CD4-positive, alpha-beta T cell (primary cell): ENCODE measurements at regions of chr3 and their contacts with region 1.

Region 1: GRCh38 chr3:70064194-70064779 is 64.8 kb downstream of the SAMMSON start:
- DNase-seq: peak in 4 of 14 experiments; percentile 3 to 34 (median 15)
- ATAC-seq: no peak
- H3K4me3 ChIP-seq: no peak overlapping the region
- H3K4me3 Mint-ChIP-seq: no peak overlapping the region
- H3K27ac ChIP-seq: no peak overlapping the region
- H3K27ac Mint-ChIP-seq: no peak overlapping the region
- H3K4me1 ChIP-seq: no peaks in the 10 kb centered on the region
- H3K4me1 Mint-ChIP-seq: no peaks in the 10 kb centered on the region
- H3K27me3 ChIP-seq: no peaks in the 10 kb centered on the region
- H3K27me3 Mint-ChIP-seq: peaks cover 3% of the 10 kb centered on the region
- CTCF ChIP-seq: peak; percentile 54

Region 2: DNA sequence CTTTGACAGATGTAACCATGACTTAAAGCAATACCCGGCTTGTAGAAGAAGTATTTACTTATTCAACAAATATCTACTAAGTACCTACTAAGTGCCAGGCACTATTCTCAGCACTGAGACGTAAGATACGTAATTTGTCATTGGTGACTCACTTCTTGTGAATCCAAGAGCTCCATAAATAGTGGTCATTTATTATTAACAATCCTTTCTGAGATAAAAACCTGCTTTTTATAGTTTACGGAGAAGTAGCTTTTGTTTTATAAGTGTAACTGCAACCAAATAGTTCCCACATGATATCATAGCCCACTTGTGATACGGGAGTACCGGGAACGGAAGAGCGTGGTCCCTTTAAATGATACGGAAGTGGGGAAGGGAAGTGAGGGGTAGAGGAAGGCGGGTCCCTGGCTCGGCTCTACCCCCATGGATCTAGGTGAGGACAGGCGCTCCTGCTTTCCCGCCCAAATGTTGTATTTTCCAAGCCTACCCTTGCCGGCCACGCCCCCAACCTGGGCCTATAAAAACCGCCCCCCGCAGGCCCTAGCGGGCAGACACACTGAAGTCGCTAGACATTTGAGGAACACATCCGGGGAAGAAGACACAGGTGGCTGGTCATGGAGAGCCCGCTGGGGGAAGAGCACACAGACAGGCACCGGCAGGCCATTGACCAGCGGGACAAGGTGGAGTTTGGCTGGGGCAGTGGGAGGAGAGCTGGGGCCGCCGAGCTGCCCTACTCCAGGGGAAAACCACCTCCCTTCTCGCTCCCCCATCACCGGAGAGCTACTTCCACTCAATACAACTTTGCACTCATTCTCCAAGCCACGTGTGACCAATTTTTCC is 64.9 kb before region 1 on chr3 and contains the start of gene SAMMSON:
- CTCF ChIA-PET with region 1: no interaction called
- POLR2A ChIA-PET with region 1: no interaction called
- intact Hi-C with region 1: no loop called
- DNase-seq: no peak
- ATAC-seq: no peak
- H3K4me3 ChIP-seq: no peak within 1 kb of the TSS
- H3K4me3 Mint-ChIP-seq: no peak within 1 kb of the TSS
- H3K27ac ChIP-seq: no peak within 1 kb of the TSS
- H3K27ac Mint-ChIP-seq: no peak within 1 kb of the TSS
- H3K4me1 ChIP-seq: no peaks in the 10 kb centered on the region
- H3K4me1 Mint-ChIP-seq: no peaks in the 10 kb centered on the region
- H3K27me3 ChIP-seq: no peaks in the 10 kb centered on the region
- H3K27me3 Mint-ChIP-seq: no peaks in the 10 kb centered on the region
- CTCF ChIP-seq: no peak
- total RNA-seq, gene SAMMSON: not detected

Region 3: GRCh38 chr3:71616571-71617101 is 1552.3 kb after region 1 on chr3:
- CTCF ChIA-PET with region 1: no interaction called
- POLR2A ChIA-PET with region 1: no interaction called
- intact Hi-C with region 1: no loop called
- DNase-seq: no peak
- ATAC-seq: no peak
- H3K4me3 ChIP-seq: no peak overlapping the region
- H3K4me3 Mint-ChIP-seq: no peak overlapping the region
- H3K27ac ChIP-seq: no peak overlapping the region
- H3K27ac Mint-ChIP-seq: no peak overlapping the region
- H3K4me1 ChIP-seq: no peaks in the 10 kb centered on the region
- H3K4me1 Mint-ChIP-seq: peaks cover 9% of the 10 kb centered on the region
- H3K27me3 ChIP-seq: no peaks in the 10 kb centered on the region
- H3K27me3 Mint-ChIP-seq: no peaks in the 10 kb centered on the region
- CTCF ChIP-seq: no peak

Region 4: GRCh38 chr3:71652781-71653413 is 1588.6 kb after region 1 on chr3:
- CTCF ChIA-PET with region 1: no interaction called
- POLR2A ChIA-PET with region 1: no interaction called
- intact Hi-C with region 1: loop called (anchors 2 to 5 kb)
- DNase-seq: peak in 4 of 14 experiments; percentile 20 to 57 (median 38)
- ATAC-seq: no peak
- H3K4me3 ChIP-seq: no peak overlapping the region
- H3K4me3 Mint-ChIP-seq: no peak overlapping the region
- H3K27ac ChIP-seq: no peak overlapping the region
- H3K27ac Mint-ChIP-seq: no peak overlapping the region
- H3K4me1 ChIP-seq: no peaks in the 10 kb centered on the region
- H3K4me1 Mint-ChIP-seq: peaks cover 6% of the 10 kb centered on the region
- H3K27me3 ChIP-seq: no peaks in the 10 kb centered on the region
- H3K27me3 Mint-ChIP-seq: no peaks in the 10 kb centered on the region
- CTCF ChIP-seq: peak; percentile 36

Region 5: DNA sequence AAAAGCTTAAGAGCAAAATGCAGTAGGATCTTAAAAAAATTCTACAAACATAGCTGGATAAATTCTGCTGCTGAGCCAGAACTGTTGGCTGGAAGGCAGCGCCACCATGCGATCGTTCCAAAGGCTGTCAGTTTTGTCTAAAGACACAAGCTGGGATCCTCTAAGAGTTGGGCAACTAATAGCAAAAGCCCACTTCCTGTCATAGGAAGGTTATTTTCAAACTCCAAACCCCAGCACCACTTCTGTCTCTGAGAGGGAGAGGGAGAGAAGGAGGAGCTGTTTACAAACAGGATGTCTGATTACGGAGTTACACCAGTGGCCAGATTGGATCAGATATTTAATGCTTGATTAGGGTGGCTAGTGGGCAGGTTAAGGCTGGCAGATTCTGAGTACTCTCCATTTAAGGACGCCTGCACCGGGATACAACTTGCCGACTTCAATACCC is 1617.0 kb after region 1 on chr3:
- CTCF ChIA-PET with region 1: no interaction called
- POLR2A ChIA-PET with region 1: no interaction called
- intact Hi-C with region 1: loop called in 1 of 2 experiments (anchors 10 kb)
- DNase-seq: peak in 8 of 14 experiments; percentile 10 to 54 (median 28)
- ATAC-seq: peak; percentile 55
- H3K4me3 ChIP-seq: no peak overlapping the region
- H3K4me3 Mint-ChIP-seq: no peak overlapping the region
- H3K27ac ChIP-seq: no peak overlapping the region
- H3K27ac Mint-ChIP-seq: peak overlapping the region; percentile 54
- H3K4me1 ChIP-seq: no peaks in the 10 kb centered on the region
- H3K4me1 Mint-ChIP-seq: peaks cover 14% of the 10 kb centered on the region
- H3K27me3 ChIP-seq: no peaks in the 10 kb centered on the region
- H3K27me3 Mint-ChIP-seq: no peaks in the 10 kb centered on the region
- CTCF ChIP-seq: peak; percentile 43